OCI-LY7 (cell line): ENCODE measurements at regions of chr15 and their contacts with region 1.

Region 1: DNA sequence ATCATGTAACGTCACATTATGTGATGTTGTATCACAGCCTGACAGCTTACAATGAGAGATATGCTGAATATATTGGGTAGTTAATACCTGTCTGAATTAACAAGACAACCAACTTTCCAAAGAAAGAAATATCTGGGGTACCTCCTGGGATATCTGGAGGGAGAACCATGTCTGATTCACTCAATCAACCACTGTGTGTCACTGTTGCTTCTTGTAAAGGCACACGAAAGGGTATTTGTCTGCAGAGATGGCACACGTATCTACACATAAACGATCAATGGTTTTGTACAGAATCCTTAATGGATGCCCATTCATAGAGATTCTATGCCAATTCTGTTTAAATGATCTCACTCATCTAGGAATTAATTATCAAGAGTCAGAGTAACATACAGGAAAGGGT is 252.1 kb upstream of the TMCO5A start:
- DNase-seq: peak; percentile 8
- H3K4me3 ChIP-seq: no peak overlapping the region
- H3K27ac ChIP-seq: no peak overlapping the region
- H3K4me1 ChIP-seq: no peaks in the 10 kb centered on the region
- CTCF ChIP-seq: peak; percentile 57

Region 2: DNA sequence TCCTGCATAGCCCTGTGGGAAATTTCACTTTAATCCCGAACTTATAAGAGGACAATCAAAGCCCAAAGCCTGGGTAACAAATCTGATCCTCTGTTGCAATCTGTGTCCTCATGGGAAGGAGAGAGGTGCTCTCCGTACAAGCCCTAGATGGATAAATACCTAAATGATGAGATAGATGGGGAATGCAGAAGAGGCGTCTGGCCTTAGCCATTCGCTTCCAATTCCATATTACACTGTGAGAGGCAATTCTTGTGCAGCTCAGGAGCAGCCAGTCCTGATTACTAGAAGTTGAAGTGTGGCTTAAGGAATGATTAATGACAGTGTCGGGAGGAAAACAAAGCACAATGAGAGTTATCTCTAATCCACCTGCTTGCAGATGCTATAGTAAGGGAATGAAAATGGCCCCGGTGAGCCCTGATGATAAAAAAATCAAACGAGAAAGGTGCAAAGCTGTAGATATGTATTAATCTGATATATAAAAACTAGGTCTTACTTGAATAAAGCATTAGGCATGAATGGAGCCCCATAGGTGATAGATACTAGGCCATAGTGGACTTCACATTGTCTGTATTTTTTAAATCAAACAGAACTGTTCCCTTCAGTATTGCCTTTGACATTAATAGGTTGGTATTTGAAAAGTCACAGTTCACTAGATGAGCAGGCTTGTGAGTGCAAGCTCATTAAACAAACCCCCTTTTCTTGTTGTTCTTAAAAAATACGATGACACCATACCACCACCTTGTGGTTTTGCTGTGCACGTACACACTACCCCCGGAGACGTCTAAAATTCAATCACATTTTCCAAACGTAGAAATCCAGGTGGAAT is 197.9 kb after region 1 on chr15:
- CTCF ChIA-PET with region 1: no interaction called
- POLR2A ChIA-PET with region 1: no interaction called
- intact Hi-C with region 1: loop called (anchors 10 kb)
- DNase-seq: peak; percentile 31
- H3K4me3 ChIP-seq: no peak overlapping the region
- H3K27ac ChIP-seq: no peak overlapping the region
- H3K4me1 ChIP-seq: no peaks in the 10 kb centered on the region
- CTCF ChIP-seq: peak; percentile 88